Right ventricle myocardium inferior (tissue), 1 donor: ENCODE measurements at regions of chr9 and their contacts with region 1.

Region 1: GRCh38 chr9:90095682-90096081 is 490.9 kb downstream of the GADD45G start:
- DNase-seq: no peak
- ATAC-seq: no peak

Region 2: GRCh38 chr9:89999534-90000370 is 95.9 kb before region 1 on chr9:
- intact Hi-C with region 1: loop called (anchors 2 kb)
- DNase-seq: peak; percentile 80
- ATAC-seq: peak; percentile 88

Region 3: DNA sequence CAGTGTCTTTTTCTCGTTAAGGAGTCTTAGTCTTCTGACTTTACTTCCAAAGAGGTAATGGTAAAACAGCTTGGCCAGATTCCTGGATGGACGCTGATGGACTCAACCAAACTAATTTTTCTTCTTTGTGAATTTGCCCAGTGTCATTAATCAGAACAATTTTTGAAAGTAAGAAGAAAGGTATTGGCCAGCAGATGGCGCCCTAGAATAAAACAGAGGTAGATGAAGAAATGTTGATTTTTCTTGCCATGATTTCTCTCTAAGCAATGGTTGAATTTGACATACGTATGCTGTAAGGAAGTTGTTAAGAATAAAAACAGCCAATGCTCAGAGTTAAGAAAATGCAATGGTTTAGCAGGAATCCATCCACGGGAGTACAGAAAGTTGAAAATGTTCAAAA is 46.9 kb after region 1 on chr9:
- intact Hi-C with region 1: no loop called
- DNase-seq: no peak
- ATAC-seq: no peak

Region 4: GRCh38 chr9:90296539-90296938 is 200.9 kb after region 1 on chr9:
- intact Hi-C with region 1: no loop called
- DNase-seq: no peak
- ATAC-seq: no peak